ENCODE measurements at regions of chr12 and their contacts with region 1.

Region 1: GRCh38 chr12:112108201-112109079 is at the start of gene NAA25:
- DNase-seq: no peak
- H3K4me3 ChIP-seq: peak within 1 kb of the TSS; percentile 97
- CTCF ChIP-seq: no peak

Region 2: DNA sequence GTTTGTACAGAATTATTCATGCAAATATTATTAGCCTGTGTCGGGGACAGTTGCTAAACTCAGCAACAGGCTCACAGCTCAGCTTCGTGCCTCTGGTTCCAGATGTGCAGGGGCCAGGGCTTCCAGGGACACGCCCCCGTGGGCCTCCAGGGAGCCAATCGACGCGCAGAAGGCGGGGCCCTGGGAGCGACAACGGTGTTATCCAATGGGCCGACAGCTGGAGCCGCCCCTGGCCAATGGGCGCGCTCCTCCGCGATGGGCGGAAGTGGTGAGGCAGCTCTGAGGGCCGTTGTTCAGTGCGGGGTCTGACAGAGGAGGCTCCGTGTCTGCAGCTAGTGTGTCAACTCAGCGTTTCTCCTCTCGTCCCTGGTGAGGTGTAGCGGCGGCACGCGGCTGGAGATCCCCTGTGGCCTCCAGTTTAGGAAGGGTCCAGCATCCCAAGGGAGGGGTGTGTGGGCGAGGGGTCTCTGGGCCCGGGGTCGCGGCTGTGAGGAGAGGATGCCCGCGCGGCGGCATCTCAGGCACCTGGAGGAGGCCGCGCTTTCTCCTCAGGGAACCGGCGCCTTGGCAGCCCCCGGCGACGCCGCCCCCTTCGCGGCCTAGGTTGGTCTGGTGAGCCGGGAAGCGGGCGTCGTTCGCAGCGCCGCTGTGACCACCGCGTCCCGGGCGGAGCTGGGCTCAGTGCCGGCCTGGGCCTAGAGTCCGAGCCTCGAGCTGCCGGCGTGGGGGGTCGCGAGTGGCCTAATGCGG is 17.0 kb after region 1 on chr12 and contains the start of gene TRAFD1:
- CTCF ChIA-PET with region 1: interaction called, 5 read pairs
- POLR2A ChIA-PET with region 1: interaction called, 17 read pairs
- DNase-seq: peak; percentile 64
- H3K4me3 ChIP-seq: peak within 1 kb of the TSS; percentile 71
- CTCF ChIP-seq: no peak

Measured in AG04449 (cell line).